AG04450 (cell line): ENCODE measurements at regions of chr11 and their contacts with region 1.

Region 1: GRCh38 chr11:10933455-10934292 is 75.8 kb upstream of the ZBED5 start:
- DNase-seq: peak; percentile 81
- H3K4me3 ChIP-seq: peak overlapping the region; percentile 62
- H3K27ac ChIP-seq: no peak overlapping the region
- H3K27me3 ChIP-seq: no peaks in the 10 kb centered on the region
- CTCF ChIP-seq: peak; percentile 96

Region 2: DNA sequence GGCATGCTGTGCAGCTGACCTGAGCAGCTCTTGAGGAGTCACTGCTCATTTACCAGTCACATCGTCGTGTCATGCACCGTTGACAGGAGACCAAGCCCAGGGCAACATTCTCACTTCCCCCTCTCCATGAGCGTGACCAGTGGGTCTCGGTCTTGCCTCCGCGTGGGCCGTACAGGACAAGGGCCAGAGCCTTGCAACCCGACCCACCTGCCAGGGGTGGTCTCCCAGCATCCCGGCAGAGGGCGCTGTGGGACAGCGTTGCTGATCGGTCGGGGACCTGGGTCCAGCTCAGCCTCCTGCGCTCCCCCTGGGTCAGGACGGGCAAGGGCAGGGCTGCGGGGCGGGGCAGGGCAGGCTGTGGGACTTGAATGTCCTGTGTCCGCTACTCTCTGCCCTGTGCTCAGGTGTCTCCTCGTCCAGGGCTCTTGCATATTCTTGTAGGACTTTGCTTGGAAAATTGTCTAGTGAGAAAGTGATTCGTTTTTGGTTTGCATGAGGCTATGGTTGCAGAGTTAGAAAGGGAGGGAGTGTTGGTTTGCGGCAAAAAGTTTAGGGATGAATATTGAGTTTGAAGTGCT is 141.2 kb before region 1 on chr11:
- CTCF ChIA-PET with region 1: interaction called, 23 read pairs
- POLR2A ChIA-PET with region 1: interaction called, 3 read pairs
- DNase-seq: peak; percentile 32
- H3K4me3 ChIP-seq: peak overlapping the region; percentile 30; the same call in 1 of the 2 replicates
- H3K27ac ChIP-seq: no peak overlapping the region
- H3K27me3 ChIP-seq: no peaks in the 10 kb centered on the region
- CTCF ChIP-seq: peak; percentile 85

Region 3: DNA sequence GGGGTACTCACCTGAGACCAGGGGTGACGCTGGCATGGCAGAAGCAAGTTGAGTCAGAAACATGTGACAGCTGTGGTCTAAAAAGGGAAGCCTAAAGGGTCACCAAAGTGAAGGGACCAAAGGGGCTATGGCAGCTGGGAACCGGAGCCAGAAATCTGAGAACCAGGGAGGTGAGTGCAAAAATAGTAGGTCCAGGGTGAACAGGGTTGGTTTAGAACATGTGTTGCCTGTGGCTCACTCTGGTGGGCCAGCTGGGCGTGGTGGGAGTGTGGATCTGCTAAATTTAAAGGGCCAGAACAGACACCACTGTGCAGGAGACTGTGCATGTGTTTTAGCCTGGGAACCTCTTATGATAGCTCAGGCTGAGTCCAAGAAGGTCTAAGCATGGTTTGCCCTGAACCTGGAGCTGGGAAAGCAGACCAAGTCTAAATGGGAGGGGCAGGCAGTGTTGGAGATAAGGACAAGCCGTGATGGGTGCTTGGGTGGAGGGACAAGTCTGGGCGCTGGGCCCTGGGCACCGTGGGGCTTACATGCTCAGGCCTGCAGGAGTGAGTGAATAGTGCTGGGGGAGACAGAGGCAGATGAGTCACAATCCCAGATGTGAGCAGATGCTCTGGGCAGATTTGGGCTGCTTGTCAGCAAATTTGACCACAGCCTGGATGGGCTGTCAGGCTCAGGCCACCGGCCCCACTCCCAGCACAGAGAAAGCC is 34.4 kb before region 1 on chr11:
- CTCF ChIA-PET with region 1: interaction called, 4 read pairs
- POLR2A ChIA-PET with region 1: interaction called, 50 read pairs
- DNase-seq: no peak
- H3K4me3 ChIP-seq: peak overlapping the region; percentile 45
- H3K27ac ChIP-seq: peak overlapping the region; percentile 100
- H3K27me3 ChIP-seq: no peaks in the 10 kb centered on the region
- CTCF ChIP-seq: no peak

Region 4: GRCh38 chr11:11016068-11016467 is 82.4 kb after region 1 on chr11:
- CTCF ChIA-PET with region 1: interaction called, 58 read pairs
- POLR2A ChIA-PET with region 1: no interaction called
- DNase-seq: no peak
- H3K4me3 ChIP-seq: no peak overlapping the region
- H3K27ac ChIP-seq: no peak overlapping the region
- H3K27me3 ChIP-seq: peaks cover 35% of the 10 kb centered on the region
- CTCF ChIP-seq: no peak

Region 5: DNA sequence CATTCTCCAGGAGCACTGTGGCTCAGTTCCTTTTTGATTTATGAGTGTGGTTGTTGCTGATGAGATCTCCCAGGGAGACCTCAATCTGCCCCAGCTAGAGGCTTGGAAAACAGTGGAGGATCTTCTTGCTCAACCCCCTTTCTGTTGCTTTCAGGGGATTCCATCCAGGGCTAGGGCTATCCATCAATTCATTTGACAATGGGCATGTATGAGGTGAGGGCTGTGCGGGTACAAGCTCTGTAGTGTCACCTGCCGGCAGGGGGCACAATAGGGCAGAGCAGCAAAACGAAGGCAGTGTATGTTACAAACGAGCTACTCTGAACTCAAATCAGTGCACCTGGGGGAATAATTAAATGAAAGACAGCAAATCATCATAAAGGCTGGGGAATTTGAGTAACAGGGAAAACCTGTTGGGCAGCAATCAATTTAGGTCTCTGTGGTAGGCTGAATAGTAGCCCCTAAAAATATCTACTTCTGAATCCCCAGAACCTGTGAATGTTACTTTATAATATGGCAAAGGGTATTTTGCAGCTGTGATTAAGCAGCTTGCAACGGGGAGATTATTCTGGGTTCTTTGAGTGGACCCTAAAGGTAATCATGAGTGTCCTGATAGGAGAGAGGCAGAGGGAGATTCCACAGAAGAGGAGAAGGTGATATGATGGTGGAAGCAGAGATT is 94.5 kb after region 1 on chr11:
- CTCF ChIA-PET with region 1: interaction called, 53 read pairs
- POLR2A ChIA-PET with region 1: no interaction called
- DNase-seq: no peak
- H3K4me3 ChIP-seq: no peak overlapping the region
- H3K27ac ChIP-seq: no peak overlapping the region
- H3K27me3 ChIP-seq: no peaks in the 10 kb centered on the region
- CTCF ChIP-seq: peak; percentile 84

Region 6: DNA sequence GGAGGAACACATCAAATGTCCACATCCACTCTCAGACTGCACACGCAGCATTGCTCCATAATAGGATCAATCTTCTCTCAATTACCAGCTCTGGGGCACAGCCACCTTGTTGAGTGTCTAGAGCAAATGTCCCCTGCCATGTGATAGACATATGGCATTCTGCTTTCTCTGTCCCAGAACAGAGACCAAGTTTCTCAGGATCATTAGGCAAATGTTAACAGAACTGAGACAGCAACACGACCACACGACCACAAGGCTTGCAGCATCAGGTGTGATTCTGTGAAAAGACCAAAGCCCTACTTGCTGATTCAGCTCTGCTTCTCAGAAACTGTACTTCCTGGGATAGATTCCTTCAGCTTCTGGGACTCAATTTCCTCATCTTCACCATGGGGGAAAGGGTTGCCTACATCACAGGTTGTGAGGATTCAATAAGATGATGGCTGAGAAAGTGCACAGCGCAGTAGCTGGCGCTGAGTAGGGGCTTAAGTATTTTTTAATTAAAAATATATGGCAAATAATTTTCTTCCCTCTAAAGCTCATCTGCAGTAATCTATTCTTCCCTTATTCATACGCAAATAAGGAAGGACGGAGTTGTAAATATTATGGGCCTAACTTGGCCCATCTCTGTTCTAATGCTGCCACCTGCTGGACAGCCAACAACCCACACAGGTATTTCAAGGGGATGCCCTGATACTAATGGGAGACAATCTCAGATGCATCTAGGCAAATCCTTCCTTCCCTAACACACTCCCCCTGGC is 853.8 kb after region 1 on chr11:
- CTCF ChIA-PET with region 1: interaction called, 51 read pairs
- POLR2A ChIA-PET with region 1: no interaction called
- DNase-seq: peak; percentile 41
- H3K4me3 ChIP-seq: no peak overlapping the region
- H3K27ac ChIP-seq: no peak overlapping the region
- H3K27me3 ChIP-seq: peaks cover 5% of the 10 kb centered on the region
- CTCF ChIP-seq: peak; percentile 90